Activated CD4-positive, alpha-beta T cell treated with anti-CD3 and anti-CD28 coated beads, Interleukin-2, amount 10 ng/mL, durations not matched to agents 24 days and 14 days (primary cell): ENCODE measurements at regions of chr4 and their contacts with region 1.

Region 1: DNA sequence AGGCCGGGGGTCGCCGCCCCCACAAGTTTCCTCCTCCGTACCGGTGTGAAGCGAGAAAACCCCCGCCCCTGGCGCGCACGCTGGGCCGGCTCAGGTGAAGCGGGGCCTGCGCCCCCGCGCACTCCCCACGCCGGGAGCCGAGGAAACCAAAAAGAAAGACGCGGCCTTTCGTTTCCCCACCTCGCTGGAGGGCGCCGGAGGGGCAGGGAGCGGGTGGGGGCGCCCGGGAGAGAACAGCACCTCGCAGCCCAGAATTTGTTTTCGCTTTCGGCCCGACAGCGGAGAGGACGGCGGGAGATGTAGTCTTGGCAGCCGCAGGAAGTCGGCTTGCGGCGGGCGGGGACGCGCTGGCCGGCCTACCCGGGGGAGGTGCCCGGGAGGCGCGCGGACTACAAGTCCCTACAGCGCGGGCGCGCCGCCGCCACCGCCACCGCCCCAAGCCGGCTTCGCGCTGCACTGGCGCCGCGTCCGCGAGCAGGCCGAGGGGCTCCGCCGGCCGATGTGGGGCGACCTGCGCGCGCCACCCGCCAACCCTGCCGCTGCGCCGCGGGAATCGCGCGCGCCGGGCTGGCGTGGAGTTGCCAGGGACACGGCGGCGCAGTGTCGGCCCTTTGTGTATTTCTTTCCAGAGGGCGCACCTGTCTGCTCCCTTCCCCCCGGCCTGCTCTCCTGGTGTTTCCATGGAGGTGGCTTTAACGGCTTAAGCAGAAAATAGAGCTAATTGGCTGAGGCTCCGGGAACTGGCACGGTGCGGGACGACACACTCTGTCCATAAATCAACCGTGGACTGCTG is at the start of gene OTUD4:
- DNase-seq: peak; percentile 98
- H3K4me3 Mint-ChIP-seq: peak within 1 kb of the TSS; percentile 95
- H3K27ac Mint-ChIP-seq: peak within 1 kb of the TSS; percentile 97
- H3K4me1 Mint-ChIP-seq: peaks cover 24% of the 10 kb centered on the region
- H3K27me3 Mint-ChIP-seq: peaks cover 3% of the 10 kb centered on the region
- total RNA-seq, gene OTUD4: 81.2 and 86.4 TPM in 2 replicates

Region 2: GRCh38 chr4:143558823-143559756 is 1621.4 kb before region 1 on chr4:
- intact Hi-C with region 1: loop called (anchors 10 kb)
- DNase-seq: peak; percentile 90
- H3K4me3 Mint-ChIP-seq: peak overlapping the region; percentile 94
- H3K27ac Mint-ChIP-seq: peak overlapping the region; percentile 92
- H3K4me1 Mint-ChIP-seq: peaks cover 18% of the 10 kb centered on the region
- H3K27me3 Mint-ChIP-seq: no peaks in the 10 kb centered on the region

Region 3: DNA sequence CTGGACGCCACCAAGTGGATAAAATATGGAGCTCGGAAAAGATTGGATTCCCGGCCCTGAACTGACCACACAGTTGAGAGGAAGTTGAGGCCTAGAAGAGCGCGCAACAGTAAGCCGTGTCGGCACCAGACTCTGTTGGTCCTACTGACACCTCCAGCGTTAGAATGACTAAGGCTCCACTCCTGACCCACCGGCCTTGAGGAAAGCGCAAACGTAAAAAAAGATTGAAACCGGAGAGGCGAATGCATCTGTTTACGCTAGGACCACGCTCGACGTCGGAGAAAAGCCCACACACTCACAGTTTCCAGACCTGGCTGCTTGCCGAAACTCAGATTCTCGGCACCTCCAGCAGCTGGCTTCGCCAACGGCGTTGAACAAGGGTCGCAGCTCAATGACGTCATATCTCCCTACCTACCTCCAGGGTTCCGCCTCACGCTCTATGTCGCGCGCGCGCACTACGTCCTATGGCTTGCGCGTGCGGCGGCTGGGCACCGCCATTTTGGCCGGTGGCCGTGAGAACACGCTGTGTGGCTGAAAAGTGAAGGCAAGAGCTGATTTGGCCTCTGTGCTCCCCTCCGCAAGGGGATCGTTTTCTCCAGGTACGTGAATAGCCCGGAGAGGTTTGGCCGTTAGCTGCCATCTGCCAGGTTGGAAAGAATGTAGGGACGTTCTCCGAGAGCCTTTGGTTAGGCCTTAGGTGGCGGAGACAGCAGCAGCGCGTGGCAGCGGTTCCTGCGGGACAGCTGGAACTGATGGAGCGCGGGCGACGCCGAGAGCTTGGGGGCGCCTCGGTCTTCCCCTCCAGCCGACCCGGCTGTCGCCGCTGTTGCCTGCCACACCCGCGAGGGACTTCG is 82.4 kb before region 1 on chr4 and contains the starts of genes ABCE1 and ANAPC10:
- intact Hi-C with region 1: loop called (anchors 1 kb)
- DNase-seq: peak; percentile 99
- H3K4me3 Mint-ChIP-seq: peak within 1 kb of the TSS; percentile 96
- H3K27ac Mint-ChIP-seq: peak within 1 kb of the TSS; percentile 99
- H3K4me1 Mint-ChIP-seq: peaks cover 24% of the 10 kb centered on the region
- H3K27me3 Mint-ChIP-seq: no peaks in the 10 kb centered on the region
- total RNA-seq, gene ABCE1: 191 and 194 TPM in 2 replicates
- total RNA-seq, gene ANAPC10: 26.7 and 30.4 TPM in 2 replicates

Region 4: DNA sequence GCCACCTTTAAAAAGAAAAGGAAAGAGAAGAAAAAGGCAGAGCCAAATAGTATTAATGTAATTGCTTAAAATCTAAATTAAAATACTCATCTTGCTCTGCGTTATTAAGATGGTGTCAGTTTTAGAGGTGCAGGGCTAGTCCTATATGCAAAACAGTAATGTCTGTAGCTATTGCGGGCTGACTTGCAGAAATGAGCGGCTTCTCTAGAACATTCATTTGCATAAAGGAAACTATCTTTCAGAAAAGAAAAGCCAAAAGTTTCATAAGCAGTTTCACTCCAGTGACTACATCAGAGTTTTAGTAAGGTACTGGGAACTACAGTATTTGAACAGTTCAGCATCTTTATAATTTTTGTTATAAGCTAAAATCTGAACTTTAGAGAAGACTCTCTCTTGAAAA is 307.1 kb after region 1 on chr4:
- intact Hi-C with region 1: loop called (anchors 2 kb)
- DNase-seq: peak; percentile 67
- H3K4me3 Mint-ChIP-seq: no peak overlapping the region
- H3K27ac Mint-ChIP-seq: no peak overlapping the region
- H3K4me1 Mint-ChIP-seq: peaks cover 4% of the 10 kb centered on the region
- H3K27me3 Mint-ChIP-seq: peaks cover 30% of the 10 kb centered on the region

Region 5: DNA sequence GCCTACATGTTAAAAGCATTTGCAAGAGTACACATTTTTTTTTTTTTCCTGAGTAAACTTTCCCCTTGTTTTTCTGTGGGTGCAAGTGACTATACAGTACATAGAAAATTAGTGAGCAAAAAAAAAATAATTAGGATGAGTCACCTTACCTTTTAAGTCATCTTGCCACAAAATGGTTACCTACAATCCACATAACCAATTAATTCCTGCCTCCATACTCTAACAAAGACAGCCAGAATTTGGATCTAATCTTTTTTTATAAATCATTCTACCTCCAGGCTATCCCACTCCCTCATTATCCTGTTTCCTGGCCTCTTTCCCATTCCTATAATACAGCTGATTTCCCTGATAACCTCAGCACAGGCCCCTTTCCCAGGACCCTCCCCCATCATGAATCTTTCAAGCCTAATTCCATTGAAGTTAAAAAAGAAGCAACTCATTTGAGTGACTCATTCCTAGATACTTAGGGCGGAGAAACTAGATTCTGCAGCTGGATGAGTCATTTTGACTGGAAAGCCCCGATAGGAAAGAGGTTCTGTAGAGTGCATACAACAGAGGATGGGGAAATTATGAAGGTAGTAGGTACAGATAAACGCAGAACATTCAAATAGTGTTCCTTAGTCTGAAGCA is 627.6 kb after region 1 on chr4:
- intact Hi-C with region 1: loop called (anchors 1 kb)
- DNase-seq: peak; percentile 83
- H3K4me3 Mint-ChIP-seq: peak overlapping the region; percentile 60
- H3K27ac Mint-ChIP-seq: peak overlapping the region; percentile 95
- H3K4me1 Mint-ChIP-seq: peaks cover 44% of the 10 kb centered on the region
- H3K27me3 Mint-ChIP-seq: no peaks in the 10 kb centered on the region